PC-9 (cell line): ENCODE measurements at regions of chrX and their contacts with region 1.

Region 1: DNA sequence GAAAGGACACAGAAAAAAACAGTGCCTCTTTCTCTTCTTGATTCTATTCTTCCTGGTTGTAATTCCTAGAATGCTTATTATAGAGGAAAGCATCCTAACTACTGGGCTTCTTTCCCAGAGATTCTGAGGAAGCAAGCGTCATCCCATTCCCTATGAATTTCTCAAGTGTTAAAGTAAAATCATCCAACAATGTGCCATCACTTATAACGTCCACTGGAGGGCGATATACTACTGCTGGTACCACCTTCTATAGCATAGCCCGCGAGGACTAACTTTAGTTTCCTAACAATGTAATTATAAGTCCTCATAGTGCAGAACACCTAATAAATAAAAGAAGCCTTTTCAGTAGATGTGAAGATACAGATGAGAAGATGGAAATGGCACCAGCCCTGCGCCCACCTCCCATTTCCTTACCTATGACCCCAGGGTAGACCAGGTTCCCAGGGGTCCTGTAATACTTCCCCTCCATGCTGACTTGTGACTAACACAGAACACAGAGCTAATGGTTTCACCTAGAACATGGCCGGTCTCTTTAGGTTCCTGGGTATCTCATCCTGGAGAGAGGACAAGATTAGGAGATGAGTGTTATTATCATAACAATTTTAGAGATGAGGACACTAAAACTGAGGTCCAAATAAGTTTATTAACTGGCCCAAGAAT is 4.2 kb downstream of the CENPVL3 start:
- DNase-seq: no peak
- H3K4me3 ChIP-seq: no peak overlapping the region
- H3K27ac ChIP-seq: no peak overlapping the region
- H3K4me1 ChIP-seq: no peaks in the 10 kb centered on the region
- H3K27me3 ChIP-seq: peaks cover 8% of the 10 kb centered on the region; the same call in 1 of the 2 replicates
- CTCF ChIP-seq: peak; percentile 66

Region 2: DNA sequence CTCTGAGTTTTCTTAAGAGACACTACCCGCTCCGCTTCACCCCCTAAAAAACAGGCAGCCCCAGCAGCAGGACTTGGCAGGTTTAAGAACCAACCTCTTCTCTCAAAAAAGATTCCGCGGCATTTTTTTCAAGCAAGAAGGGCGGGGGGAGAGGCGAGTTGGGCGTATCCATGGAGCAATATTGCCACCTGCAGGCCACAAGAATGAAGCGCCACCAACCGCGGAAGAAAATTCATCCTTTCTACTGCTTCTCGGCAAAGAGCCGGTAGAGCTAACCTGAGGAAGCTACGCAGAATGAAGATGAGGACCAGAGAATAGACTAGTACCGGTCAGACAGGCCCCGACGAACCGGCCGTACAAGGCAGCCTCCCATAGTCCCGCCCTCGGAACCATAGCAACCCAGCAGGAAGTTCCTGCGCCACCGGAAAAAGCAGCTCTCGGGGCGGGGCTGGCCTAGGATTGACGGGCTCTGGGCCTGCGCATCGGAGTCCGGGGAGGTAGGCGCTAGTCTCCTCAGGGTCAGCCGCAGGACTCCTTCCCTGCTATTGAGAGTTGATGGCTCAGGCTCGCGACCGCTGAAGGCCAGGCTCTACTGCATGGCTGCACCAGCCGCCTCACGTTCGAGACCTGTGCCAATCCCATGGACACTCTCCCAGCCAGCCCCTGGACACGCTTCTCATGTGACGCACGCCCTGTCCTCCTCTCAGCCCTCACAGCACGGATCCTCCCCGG is 647.1 kb after region 1 on chrX:
- CTCF ChIA-PET with region 1: no interaction called
- POLR2A ChIA-PET with region 1: no interaction called
- intact Hi-C with region 1: loop called (anchors 5 kb)
- DNase-seq: peak; percentile 71 to 87
- H3K4me3 ChIP-seq: peak overlapping the region; percentile 58
- H3K27ac ChIP-seq: peak overlapping the region; percentile 58
- H3K4me1 ChIP-seq: 0 out of 2 replicates have a peak, but pooled peaks cover 4% of the 10 kb centered on the region
- H3K27me3 ChIP-seq: no peaks in the 10 kb centered on the region
- CTCF ChIP-seq: peak; percentile 97